ENCODE measurements at regions of chr6 and their contacts with region 1.

Region 1: DNA sequence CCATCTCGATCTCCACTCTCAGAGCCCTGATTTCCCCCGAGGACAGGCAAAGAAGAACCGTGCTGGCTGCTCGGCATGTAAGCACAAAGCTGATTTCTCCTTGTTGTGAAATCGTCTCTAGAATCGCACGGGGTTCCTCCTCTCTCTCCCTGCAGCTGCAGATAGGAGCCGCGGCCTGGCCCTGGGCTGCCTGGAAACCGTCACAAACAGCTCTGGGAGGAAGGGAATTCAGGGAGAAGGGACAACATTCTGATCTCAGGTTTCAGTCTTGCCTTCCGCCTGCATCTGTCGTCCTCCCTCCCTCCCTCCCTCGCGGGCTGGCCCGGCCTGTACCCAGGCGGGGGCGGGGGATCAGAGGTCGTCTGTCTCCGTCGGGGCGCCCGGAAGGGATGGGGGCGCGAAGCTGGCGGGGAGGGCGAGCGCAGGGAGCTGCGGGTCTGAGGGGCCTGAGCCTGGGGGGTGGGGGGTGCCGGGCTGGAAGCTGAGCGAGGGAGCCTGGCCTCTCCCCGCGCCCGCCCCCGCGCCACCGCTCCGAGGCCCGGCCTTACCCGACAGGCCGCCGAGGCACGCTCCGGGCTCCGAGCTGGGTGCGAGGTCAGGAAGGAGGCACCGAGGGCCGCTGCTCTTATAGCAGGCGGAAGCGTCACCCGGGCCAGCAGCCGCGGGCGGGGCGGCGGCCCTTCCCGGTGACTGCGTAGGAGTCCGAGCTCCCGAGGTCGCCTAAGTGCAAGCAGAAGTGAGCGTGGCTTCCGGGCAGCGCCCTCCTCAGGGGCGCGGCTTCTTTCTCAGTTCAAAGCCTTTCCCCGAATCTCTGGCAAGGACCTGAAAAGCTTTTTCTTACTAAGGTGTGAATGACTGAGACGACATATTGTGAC is at the start of gene SERPINB1:
- DNase-seq: peak; percentile 92
- ATAC-seq: peak; percentile 89
- H3K4me3 Mint-ChIP-seq: peak within 1 kb of the TSS; percentile 89
- H3K27ac Mint-ChIP-seq: peak within 1 kb of the TSS; percentile 83
- H3K4me1 Mint-ChIP-seq: peaks cover 65% of the 10 kb centered on the region
- H3K27me3 Mint-ChIP-seq: no peaks in the 10 kb centered on the region
- total RNA-seq, gene SERPINB1: 55.2 to 65.7 TPM

Region 2: DNA sequence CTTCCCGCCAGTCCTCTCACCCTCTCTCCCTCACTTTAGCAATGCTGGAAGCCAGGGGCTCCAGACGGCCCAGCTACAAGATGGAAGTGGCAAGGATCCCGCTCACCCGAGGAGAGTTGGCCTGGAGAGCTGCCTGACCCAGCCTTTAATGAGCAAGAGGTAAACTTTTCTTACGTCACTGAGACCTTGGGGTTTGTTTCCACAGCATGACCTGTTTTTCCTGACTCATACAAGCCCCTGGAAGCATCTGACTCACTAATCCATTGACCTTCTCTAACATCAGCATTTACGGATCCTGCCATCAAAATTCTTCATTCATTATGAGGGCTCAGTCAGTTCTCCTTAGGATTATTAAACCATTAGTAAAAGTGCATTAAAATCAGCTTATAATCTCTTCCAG is 211.1 kb before region 1 on chr6:
- CTCF ChIA-PET with region 1: no interaction called
- DNase-seq: no peak
- ATAC-seq: no peak
- H3K4me3 Mint-ChIP-seq: no peak overlapping the region
- H3K27ac Mint-ChIP-seq: no peak overlapping the region
- H3K4me1 Mint-ChIP-seq: peaks cover 2% of the 10 kb centered on the region
- H3K27me3 Mint-ChIP-seq: peaks cover 38% of the 10 kb centered on the region

Region 3: DNA sequence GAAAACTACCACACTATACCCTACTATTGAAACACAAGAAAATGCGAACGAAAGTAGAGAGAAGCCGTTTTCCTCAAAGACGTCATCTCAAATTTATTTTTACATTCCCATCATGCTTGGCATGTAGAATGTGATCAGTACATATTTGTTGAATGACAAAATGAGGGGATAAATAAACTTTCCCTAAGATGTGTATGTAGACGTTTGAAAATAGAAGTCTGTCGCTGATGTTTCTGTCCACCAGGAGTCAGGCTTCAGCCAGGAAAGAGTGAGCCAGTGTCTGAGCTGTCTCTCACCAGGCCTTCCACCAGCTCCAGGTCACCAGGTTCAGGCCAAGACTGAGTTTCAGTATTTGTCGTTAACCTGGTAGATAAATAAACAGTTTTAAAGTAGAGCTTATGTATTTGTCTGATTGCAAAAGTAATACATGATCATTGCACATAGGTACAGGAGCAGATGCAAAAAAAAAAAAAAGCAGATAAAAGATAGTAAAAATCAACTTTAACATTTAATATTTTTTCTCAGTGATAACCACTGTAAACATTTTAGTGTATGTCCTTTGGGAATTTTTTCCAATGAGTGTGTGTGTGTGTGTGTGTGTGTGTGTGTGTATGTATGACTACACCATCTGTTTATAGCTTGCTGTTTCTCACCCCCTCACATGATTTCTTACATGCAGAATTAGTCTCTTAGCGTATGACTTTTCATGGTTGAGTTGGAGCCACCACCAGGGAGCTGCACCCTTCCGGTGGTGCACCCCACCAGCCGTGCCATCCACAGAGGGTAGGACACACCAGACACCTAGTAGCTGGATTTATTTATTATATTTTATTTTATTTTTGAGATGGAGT is 50.2 kb before region 1 on chr6:
- CTCF ChIA-PET with region 1: interaction called, 55 read pairs
- DNase-seq: peak; percentile 86
- ATAC-seq: peak; percentile 82
- H3K4me3 Mint-ChIP-seq: no peak overlapping the region
- H3K27ac Mint-ChIP-seq: peak overlapping the region; percentile 76
- H3K4me1 Mint-ChIP-seq: peaks cover 37% of the 10 kb centered on the region
- H3K27me3 Mint-ChIP-seq: no peaks in the 10 kb centered on the region

Region 4: GRCh38 chr6:2911171-2911570 is 69.7 kb after region 1 on chr6:
- CTCF ChIA-PET with region 1: interaction called, 96 read pairs
- DNase-seq: no peak
- ATAC-seq: no peak
- H3K4me3 Mint-ChIP-seq: no peak overlapping the region
- H3K27ac Mint-ChIP-seq: no peak overlapping the region
- H3K4me1 Mint-ChIP-seq: peaks cover 24% of the 10 kb centered on the region
- H3K27me3 Mint-ChIP-seq: no peaks in the 10 kb centered on the region

Region 5: DNA sequence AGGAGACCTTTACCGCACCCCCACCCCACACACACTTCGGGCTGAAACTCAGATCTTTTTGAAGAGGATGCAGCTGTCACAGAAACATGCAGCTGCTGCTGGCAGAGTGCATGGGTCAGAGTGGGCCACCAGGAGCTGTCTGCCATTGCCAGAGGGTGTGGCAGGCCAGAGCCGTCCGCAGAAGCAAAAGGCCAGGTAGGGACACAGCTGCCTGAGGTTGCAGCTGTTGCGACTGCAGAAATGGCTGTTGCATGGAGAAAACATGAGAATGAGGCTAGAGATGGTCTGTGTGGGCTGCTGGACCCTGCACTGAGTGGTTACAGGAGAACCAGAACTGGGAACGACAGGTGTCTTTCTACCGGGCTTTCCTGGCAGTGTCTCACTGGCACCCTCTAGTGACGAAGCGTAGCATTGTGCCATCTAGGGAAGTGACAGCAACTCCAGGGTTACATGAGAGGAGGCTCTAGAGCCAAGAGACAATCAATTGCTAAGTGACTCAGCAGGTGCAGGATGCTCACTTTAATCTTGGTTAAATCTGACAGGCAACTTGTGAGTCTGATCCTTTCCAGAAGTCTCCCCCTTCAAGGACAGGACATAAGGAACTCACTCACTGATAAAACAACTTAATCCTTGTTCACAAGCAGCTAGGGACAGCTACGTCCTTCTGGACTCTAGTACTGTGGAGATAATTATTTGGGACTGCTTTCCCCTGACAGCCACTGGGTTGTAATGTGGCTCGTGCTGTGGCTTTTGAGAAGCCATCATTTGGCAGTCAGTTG is 90.7 kb after region 1 on chr6:
- CTCF ChIA-PET with region 1: interaction called, 115 read pairs
- DNase-seq: peak; percentile 92
- ATAC-seq: peak; percentile 91
- H3K4me3 Mint-ChIP-seq: no peak overlapping the region
- H3K27ac Mint-ChIP-seq: peak overlapping the region; percentile 48
- H3K4me1 Mint-ChIP-seq: peaks cover 20% of the 10 kb centered on the region
- H3K27me3 Mint-ChIP-seq: peaks cover 7% of the 10 kb centered on the region

Region 6: GRCh38 chr6:2988426-2989331 is 147.2 kb after region 1 on chr6:
- CTCF ChIA-PET with region 1: interaction called, 49 read pairs
- DNase-seq: peak; percentile 86
- ATAC-seq: peak; percentile 81
- H3K4me3 Mint-ChIP-seq: peak overlapping the region; percentile 95
- H3K27ac Mint-ChIP-seq: peak overlapping the region; percentile 99
- H3K4me1 Mint-ChIP-seq: peaks cover 20% of the 10 kb centered on the region
- H3K27me3 Mint-ChIP-seq: peaks cover 3% of the 10 kb centered on the region